ENCODE measurements at regions of chr5 and their contacts with region 1.

Region 1: DNA sequence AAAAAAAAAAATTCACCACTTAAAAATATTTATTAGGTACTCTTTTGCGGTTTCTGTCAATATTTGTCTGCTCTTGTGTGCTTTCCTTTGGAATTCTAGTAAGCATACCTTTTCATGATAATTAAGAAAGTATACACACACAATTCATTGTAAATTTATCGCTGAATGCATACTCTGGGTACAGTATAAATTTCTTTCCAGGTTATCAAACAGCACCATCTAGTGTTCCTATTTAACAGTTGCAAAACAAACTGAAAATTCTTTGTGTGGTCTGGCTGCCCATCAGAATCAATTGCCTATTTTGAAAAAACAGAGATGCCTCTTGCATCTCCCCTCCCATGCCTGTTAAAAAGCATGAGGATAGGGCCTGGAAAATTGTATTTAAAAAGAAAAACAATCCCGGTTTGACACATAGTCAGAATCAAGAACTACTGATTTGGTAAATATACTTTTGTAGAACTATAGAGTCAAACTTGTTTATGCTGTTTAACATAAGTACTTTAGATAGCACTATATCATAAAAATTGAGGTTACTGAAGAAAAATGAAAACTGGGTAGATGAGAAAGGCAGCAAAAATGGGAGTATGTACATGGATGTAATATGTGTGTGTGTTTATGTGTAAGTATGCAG is 16.2 kb downstream of the PGGT1B start:
- DNase-seq: no peak
- H3K4me3 ChIP-seq: no peak overlapping the region
- H3K27ac ChIP-seq: no peak overlapping the region
- H3K4me1 ChIP-seq: peaks cover 6 to 20% of the 10 kb centered on the region in 2 donors
- H3K27me3 ChIP-seq: no peaks in the 10 kb centered on the region
- CTCF ChIP-seq: peak; percentile 61 to 80 (median 72)
- POLR2A ChIP-seq: no peak

Region 2: DNA sequence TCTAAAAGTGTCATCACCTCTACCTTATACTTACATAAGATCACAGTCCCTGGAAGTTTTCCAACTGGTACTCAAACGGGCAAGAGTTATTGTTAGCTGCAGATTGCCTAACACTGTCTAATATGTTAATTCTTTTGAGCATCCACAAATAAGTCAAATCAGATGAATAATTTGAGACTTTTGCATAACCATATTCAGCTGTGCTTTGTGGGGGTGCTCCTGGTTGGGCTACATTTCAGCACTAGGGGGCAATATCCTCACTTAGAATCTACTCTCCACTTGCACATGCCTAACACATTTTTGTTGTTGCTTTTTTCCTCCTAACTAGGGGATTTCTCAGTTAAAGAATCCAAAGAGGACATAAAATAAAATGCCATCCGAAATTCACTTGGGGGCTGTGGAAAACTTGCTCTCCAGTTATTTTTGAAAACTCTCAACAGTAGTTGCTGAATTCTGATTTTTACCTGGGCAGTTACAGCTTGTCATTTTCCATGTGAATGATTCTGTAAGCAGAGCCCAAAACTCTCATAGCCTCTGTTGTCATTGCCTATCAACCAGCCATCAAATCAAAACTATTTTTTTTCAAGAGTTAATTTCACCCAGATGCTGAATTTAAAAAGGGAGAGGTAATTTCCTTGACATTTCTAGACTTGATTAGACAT is 148.3 kb before region 1 on chr5:
- intact Hi-C with region 1: loop called (anchors 5 kb)
- DNase-seq: peak; percentile 24 to 62 (median 39)
- H3K4me3 ChIP-seq: no peak overlapping the region
- H3K27ac ChIP-seq: no peak overlapping the region
- H3K4me1 ChIP-seq: peaks cover 0 to 11% of the 10 kb centered on the region in 2 donors
- H3K27me3 ChIP-seq: no peaks in the 10 kb centered on the region
- CTCF ChIP-seq: peak; percentile 59 to 74 (median 70)
- POLR2A ChIP-seq: no peak

Measured in adrenal gland (tissue), 19 donors.